Activated naive CD4-positive, alpha-beta T cell treated with anti-CD3 and anti-CD28 coated beads, Interleukin-2, amount 10 ng/mL, durations not matched to agents 7 days and 5 days (primary cell): ENCODE measurements at regions of chr6 and their contacts with region 1.

Region 1: DNA sequence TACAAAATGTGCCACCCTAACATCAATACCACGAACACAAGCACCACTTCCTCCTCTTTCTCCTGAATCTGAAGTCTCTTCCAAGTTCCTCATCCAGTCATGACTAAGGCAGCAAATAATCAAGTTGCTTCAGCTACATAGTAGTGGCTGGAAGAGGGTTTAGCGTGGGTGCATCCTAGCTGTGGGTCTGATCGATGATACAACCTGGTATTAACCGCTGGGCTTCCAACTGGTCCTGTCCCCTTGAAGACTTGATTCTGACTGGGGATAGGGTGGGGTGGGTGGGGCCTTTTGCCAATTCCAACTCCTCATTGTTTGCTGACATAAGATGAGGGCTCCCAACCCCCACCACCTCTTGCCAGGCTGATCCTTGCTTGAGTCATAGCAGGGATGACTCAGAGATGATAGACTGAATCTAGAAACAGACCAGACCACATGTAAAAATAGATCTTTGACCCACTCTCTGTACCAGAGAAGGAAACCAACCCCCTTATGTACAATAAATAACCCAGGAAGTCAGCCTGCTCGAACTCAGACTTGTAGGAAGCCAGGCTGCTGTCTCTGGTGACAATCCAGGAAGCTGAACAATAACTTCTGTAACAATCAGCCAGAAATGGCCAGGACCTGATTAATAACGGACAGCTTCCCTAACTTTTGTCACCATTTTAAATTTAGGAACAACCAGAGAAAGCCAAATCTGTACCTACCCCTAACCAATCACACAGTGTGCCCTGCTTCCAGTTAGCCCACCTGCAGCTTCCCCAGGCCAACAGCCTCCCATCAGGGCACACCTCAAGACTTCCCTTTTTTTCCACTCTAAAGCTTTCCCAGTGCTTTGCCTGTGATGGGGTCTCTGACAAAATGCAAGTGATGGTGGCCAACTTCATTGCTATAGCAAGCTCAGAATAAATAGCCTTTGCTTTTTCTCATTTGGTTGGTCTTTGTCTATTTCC is 68.9 kb upstream of the FAM184A start:
- DNase-seq: peak; percentile 35
- H3K4me3 Mint-ChIP-seq: no peak overlapping the region
- H3K27ac Mint-ChIP-seq: peak overlapping the region; percentile 60
- H3K4me1 Mint-ChIP-seq: peaks cover 37% of the 10 kb centered on the region
- H3K27me3 Mint-ChIP-seq: no peaks in the 10 kb centered on the region

Region 2: DNA sequence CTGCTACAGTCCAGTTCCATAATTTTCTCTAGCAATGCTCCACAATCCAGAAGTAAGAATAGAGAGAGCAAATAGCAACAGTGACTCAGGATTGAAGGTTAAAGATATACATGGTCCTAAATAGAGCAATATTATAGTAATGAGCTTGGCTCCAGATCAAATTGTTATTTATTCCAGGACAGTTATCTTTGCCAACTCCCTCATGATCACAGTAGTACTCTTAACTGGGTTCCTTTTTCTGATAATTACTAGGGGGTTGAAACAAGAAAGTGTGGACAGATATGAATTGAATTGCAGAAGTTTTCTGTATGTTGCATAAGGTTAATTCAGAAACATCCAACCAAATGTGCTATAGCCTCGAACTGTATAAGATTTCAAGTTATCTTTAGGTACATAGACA is 80.9 kb before region 1 on chr6:
- CTCF ChIA-PET with region 1: no interaction called
- DNase-seq: no peak
- H3K4me3 Mint-ChIP-seq: no peak overlapping the region
- H3K27ac Mint-ChIP-seq: no peak overlapping the region
- H3K4me1 Mint-ChIP-seq: no peaks in the 10 kb centered on the region
- H3K27me3 Mint-ChIP-seq: no peaks in the 10 kb centered on the region

Region 3: DNA sequence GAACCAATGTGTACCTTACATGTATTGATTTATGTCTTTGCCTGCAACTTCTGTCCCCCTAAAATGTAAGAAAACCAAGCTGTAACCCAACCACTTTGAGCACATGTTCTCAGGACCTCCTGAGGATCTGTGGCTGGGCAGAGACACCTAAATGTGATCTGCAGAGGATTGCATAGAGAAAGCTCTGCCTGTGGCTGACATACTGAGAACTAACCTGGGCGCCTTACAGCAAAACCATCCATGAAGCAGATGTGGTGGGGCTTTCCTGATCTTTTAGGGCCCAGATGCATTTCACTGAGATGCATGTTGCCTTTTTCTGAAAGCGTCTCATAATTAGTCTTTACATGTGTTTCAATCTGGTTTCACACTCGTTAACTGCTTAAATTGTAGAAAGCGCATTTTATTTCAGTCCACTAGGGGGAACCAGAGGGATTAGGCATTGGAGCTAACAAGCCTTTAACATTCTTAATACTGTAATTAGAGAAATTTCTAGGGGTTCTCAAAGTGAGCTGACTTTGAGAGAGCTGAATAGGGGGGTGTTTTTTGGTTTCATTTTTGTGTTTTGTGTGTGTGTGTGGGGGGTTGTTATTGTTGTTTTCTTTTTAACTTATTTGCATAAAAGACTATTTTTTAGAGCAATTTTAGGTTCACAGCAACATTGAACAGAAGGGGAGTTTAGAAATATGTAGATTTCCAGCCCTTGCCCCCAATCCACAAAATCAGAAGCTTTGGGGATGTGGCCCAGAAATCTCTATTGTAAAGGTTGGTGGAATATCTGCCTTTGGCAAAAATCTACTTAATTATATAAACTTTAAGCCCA is 18.0 kb before region 1 on chr6:
- CTCF ChIA-PET with region 1: interaction called, 17 read pairs
- DNase-seq: no peak
- H3K4me3 Mint-ChIP-seq: no peak overlapping the region
- H3K27ac Mint-ChIP-seq: no peak overlapping the region
- H3K4me1 Mint-ChIP-seq: no peaks in the 10 kb centered on the region
- H3K27me3 Mint-ChIP-seq: peaks cover 18% of the 10 kb centered on the region

Region 4: GRCh38 chr6:119343167-119343566 is 195.8 kb after region 1 on chr6:
- CTCF ChIA-PET with region 1: interaction called, 25 read pairs
- DNase-seq: no peak
- H3K4me3 Mint-ChIP-seq: no peak overlapping the region
- H3K27ac Mint-ChIP-seq: no peak overlapping the region
- H3K4me1 Mint-ChIP-seq: peaks cover 42% of the 10 kb centered on the region
- H3K27me3 Mint-ChIP-seq: no peaks in the 10 kb centered on the region